CD4-positive, alpha-beta memory T cell (primary cell): ENCODE measurements at regions of chr5 and their contacts with region 1.

Region 1: GRCh38 chr5:143824851-143825720 is 13.1 kb downstream of the HMHB1 start:
- DNase-seq: peak; percentile 72 to 80 (median 75)
- H3K4me3 ChIP-seq: no peak overlapping the region
- H3K4me3 Mint-ChIP-seq: no peak overlapping the region
- H3K27ac ChIP-seq: no peak overlapping the region
- H3K27ac Mint-ChIP-seq: no peak overlapping the region
- H3K4me1 ChIP-seq: peaks cover 27% of the 10 kb centered on the region
- H3K4me1 Mint-ChIP-seq: peaks cover 16 to 19% (median 17%) of the 10 kb centered on the region in 4 donors
- H3K27me3 ChIP-seq: no peaks in the 10 kb centered on the region
- H3K27me3 Mint-ChIP-seq: peaks cover 0 to 2% of the 10 kb centered on the region in 2 donors

Region 2: GRCh38 chr5:142922223-142922952 is 902.7 kb before region 1 on chr5:
- CTCF ChIA-PET with region 1: interaction called, 87 read pairs
- POLR2A ChIA-PET with region 1: no interaction called
- intact Hi-C with region 1: loop called (anchors 1 kb)
- DNase-seq: peak in 4 of 5 donors; percentile 9 to 32 (median 20)
- H3K4me3 ChIP-seq: no peak overlapping the region
- H3K4me3 Mint-ChIP-seq: no peak overlapping the region
- H3K27ac ChIP-seq: no peak overlapping the region
- H3K27ac Mint-ChIP-seq: peak overlapping the region in 4 of 7 donors; percentile 19 to 60 (median 27)
- H3K4me1 ChIP-seq: peaks cover 10% of the 10 kb centered on the region
- H3K4me1 Mint-ChIP-seq: peaks cover 19 to 34% (median 28%) of the 10 kb centered on the region in 4 donors
- H3K27me3 ChIP-seq: no peaks in the 10 kb centered on the region
- H3K27me3 Mint-ChIP-seq: no peaks in the 10 kb centered on the region

Region 3: DNA sequence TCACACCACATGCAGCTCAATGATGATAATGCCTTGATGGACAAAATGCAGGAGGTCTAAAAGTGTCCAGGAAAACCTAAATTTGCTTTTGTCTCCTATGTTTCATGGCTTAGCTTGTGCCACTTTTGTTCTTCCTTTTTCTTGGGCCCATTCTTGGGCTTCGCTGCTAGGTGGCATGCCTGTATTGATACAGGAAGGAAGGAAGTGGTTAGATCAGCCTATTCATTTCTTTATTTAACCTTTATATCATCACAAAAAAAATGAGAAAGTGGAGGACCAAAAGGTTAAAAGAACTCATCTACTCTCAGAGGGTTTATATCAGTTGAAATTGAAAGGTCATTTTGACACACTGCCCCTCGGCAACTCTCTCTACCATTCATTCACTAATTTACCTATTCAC is 794.7 kb before region 1 on chr5:
- CTCF ChIA-PET with region 1: interaction called, 20 read pairs
- POLR2A ChIA-PET with region 1: no interaction called
- intact Hi-C with region 1: loop called (anchors 1 kb)
- DNase-seq: peak in 4 of 5 donors; percentile 31 to 46 (median 42)
- H3K4me3 ChIP-seq: no peak overlapping the region
- H3K4me3 Mint-ChIP-seq: peak overlapping the region in 7 of 8 donors; percentile 33 to 64 (median 50)
- H3K27ac ChIP-seq: no peak overlapping the region
- H3K27ac Mint-ChIP-seq: peak overlapping the region; percentile 5 to 81 (median 58)
- H3K4me1 ChIP-seq: peaks cover 23% of the 10 kb centered on the region
- H3K4me1 Mint-ChIP-seq: peaks cover 20 to 57% (median 27%) of the 10 kb centered on the region in 4 donors
- H3K27me3 ChIP-seq: no peaks in the 10 kb centered on the region
- H3K27me3 Mint-ChIP-seq: no peaks in the 10 kb centered on the region

Region 4: GRCh38 chr5:143290125-143290524 is 535.0 kb before region 1 on chr5:
- CTCF ChIA-PET with region 1: interaction called, 4 read pairs
- POLR2A ChIA-PET with region 1: no interaction called
- intact Hi-C with region 1: loop called (anchors 10 kb)
- DNase-seq: no peak
- H3K4me3 ChIP-seq: no peak overlapping the region
- H3K4me3 Mint-ChIP-seq: no peak overlapping the region
- H3K27ac ChIP-seq: no peak overlapping the region
- H3K27ac Mint-ChIP-seq: no peak overlapping the region
- H3K4me1 ChIP-seq: no peaks in the 10 kb centered on the region
- H3K4me1 Mint-ChIP-seq: peaks cover 2 to 18% (median 10%) of the 10 kb centered on the region in 4 donors
- H3K27me3 ChIP-seq: no peaks in the 10 kb centered on the region
- H3K27me3 Mint-ChIP-seq: no peaks in the 10 kb centered on the region

Region 5: GRCh38 chr5:143968011-143968878 is 143.2 kb after region 1 on chr5:
- CTCF ChIA-PET with region 1: interaction called, 5 read pairs
- POLR2A ChIA-PET with region 1: no interaction called
- intact Hi-C with region 1: loop called (anchors 5 kb)
- DNase-seq: peak in 4 of 5 donors; percentile 14 to 24 (median 22)
- H3K4me3 ChIP-seq: no peak overlapping the region
- H3K4me3 Mint-ChIP-seq: no peak overlapping the region
- H3K27ac ChIP-seq: no peak overlapping the region
- H3K27ac Mint-ChIP-seq: no peak overlapping the region
- H3K4me1 ChIP-seq: no peaks in the 10 kb centered on the region
- H3K4me1 Mint-ChIP-seq: peaks cover 0 to 3% (median 0%) of the 10 kb centered on the region in 4 donors
- H3K27me3 ChIP-seq: no peaks in the 10 kb centered on the region
- H3K27me3 Mint-ChIP-seq: peaks cover 4 to 13% of the 10 kb centered on the region in 2 donors